ENCODE measurements at regions of chr2 and their contacts with region 1.

Region 1: GRCh38 chr2:151409601-151410484 is at the start of gene RIF1:
- DNase-seq: peak; percentile 68 to 77 (median 74)
- H3K4me3 ChIP-seq: peak within 1 kb of the TSS; percentile 69 to 95
- H3K4me3 Mint-ChIP-seq: peak within 1 kb of the TSS; percentile 91 to 99 (median 96)
- H3K27ac ChIP-seq: peak within 1 kb of the TSS; percentile 85
- H3K27ac Mint-ChIP-seq: peak within 1 kb of the TSS; percentile 86 to 97 (median 94)
- H3K4me1 ChIP-seq: peaks cover 22% of the 10 kb centered on the region
- H3K4me1 Mint-ChIP-seq: peaks cover 18 to 46% (median 31%) of the 10 kb centered on the region in 4 donors
- H3K27me3 ChIP-seq: no peaks in the 10 kb centered on the region
- H3K27me3 Mint-ChIP-seq: no peaks in the 10 kb centered on the region
- total RNA-seq, gene RIF1: 72.3 to 73.3 TPM

Region 2: GRCh38 chr2:149587220-149587949 is 1822.5 kb before region 1 on chr2 and contains the start of gene MMADHC:
- CTCF ChIA-PET with region 1: no interaction called
- POLR2A ChIA-PET with region 1: interaction called, 10 read pairs
- intact Hi-C with region 1: loop called (anchors 5 kb)
- DNase-seq: peak; percentile 90 to 93 (median 93)
- H3K4me3 ChIP-seq: peak within 1 kb of the TSS; percentile 90 to 91
- H3K4me3 Mint-ChIP-seq: peak within 1 kb of the TSS; percentile 93 to 100 (median 98)
- H3K27ac ChIP-seq: peak within 1 kb of the TSS; percentile 98
- H3K27ac Mint-ChIP-seq: peak within 1 kb of the TSS; percentile 96 to 100 (median 99)
- H3K4me1 ChIP-seq: peaks cover 40% of the 10 kb centered on the region
- H3K4me1 Mint-ChIP-seq: peaks cover 22 to 55% (median 42%) of the 10 kb centered on the region in 4 donors
- H3K27me3 ChIP-seq: no peaks in the 10 kb centered on the region
- H3K27me3 Mint-ChIP-seq: peaks cover 3 to 17% of the 10 kb centered on the region in 2 donors
- total RNA-seq, gene MMADHC: 66.4 to 69.4 TPM

Region 3: DNA sequence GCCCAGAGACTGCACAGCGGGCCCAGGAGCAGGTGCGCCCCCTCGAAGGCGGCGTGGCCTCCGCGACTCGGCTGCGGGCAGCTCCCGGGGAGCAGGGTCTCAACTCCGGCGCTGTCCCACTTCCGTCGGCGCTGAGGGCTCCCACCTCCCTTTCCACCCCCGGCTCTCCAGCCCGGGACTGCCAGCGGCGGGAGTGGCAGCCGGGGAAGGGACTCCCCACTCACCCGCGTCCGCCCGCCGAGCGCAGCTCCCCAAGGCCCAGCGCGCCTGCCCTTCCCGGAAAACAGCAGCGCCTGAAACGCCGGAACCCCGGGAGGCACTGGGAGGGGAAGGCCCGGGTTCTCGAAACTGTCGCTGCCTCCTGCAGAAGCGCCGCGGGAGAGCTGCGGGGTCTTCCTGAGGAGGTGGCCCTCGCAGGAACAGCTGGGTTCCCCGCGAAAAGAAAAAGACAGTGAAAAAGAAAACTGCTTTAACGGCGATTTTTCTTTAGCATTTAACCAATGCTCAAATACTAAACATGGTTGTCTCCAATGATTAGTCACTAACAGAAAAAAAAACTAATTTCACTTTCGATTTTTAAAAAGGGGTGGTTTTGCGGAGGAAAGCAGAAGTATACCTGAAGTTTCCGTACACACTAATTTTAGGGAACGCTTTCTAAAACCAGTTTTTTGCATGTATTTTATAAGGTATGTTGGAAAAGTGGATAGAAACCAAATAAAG is 120.3 kb before region 1 on chr2 and contains the start of gene NMI:
- CTCF ChIA-PET with region 1: interaction called, 6 read pairs
- POLR2A ChIA-PET with region 1: interaction called, 26 read pairs
- intact Hi-C with region 1: loop called (anchors 1 kb)
- DNase-seq: peak; percentile 75 to 84 (median 81)
- H3K4me3 ChIP-seq: peak within 1 kb of the TSS; percentile 70 to 82
- H3K4me3 Mint-ChIP-seq: peak within 1 kb of the TSS; percentile 90 to 98 (median 94)
- H3K27ac ChIP-seq: peak within 1 kb of the TSS; percentile 95
- H3K27ac Mint-ChIP-seq: peak within 1 kb of the TSS; percentile 96 to 99 (median 98)
- H3K4me1 ChIP-seq: peaks cover 45% of the 10 kb centered on the region
- H3K4me1 Mint-ChIP-seq: peaks cover 31 to 62% (median 49%) of the 10 kb centered on the region in 4 donors
- H3K27me3 ChIP-seq: no peaks in the 10 kb centered on the region
- H3K27me3 Mint-ChIP-seq: no peaks in the 10 kb centered on the region
- total RNA-seq, gene NMI: 38.6 to 40.0 TPM

Region 4: GRCh38 chr2:151374426-151374825 is 35.4 kb before region 1 on chr2:
- CTCF ChIA-PET with region 1: no interaction called
- POLR2A ChIA-PET with region 1: no interaction called
- intact Hi-C with region 1: no loop called
- DNase-seq: no peak
- H3K4me3 ChIP-seq: no peak overlapping the region
- H3K4me3 Mint-ChIP-seq: no peak overlapping the region
- H3K27ac ChIP-seq: no peak overlapping the region
- H3K27ac Mint-ChIP-seq: no peak overlapping the region
- H3K4me1 ChIP-seq: peaks cover 4% of the 10 kb centered on the region
- H3K4me1 Mint-ChIP-seq: peaks cover 0 to 3% (median 0%) of the 10 kb centered on the region in 4 donors
- H3K27me3 ChIP-seq: no peaks in the 10 kb centered on the region
- H3K27me3 Mint-ChIP-seq: peaks cover 2 to 3% of the 10 kb centered on the region in 2 donors

Region 5: GRCh38 chr2:151422917-151423439 is 13.1 kb after region 1 on chr2:
- CTCF ChIA-PET with region 1: interaction called, 4 read pairs
- POLR2A ChIA-PET with region 1: interaction called, 3 read pairs
- intact Hi-C with region 1: loop called (anchors 1 kb)
- DNase-seq: no peak
- H3K4me3 ChIP-seq: no peak overlapping the region
- H3K4me3 Mint-ChIP-seq: peak overlapping the region in 3 of 8 donors; percentile 1 to 18 (median 8)
- H3K27ac ChIP-seq: peak overlapping the region; percentile 33
- H3K27ac Mint-ChIP-seq: peak overlapping the region in 6 of 7 donors; percentile 11 to 95 (median 88)
- H3K4me1 ChIP-seq: peaks cover 29% of the 10 kb centered on the region
- H3K4me1 Mint-ChIP-seq: peaks cover 30 to 44% (median 36%) of the 10 kb centered on the region in 4 donors
- H3K27me3 ChIP-seq: no peaks in the 10 kb centered on the region
- H3K27me3 Mint-ChIP-seq: no peaks in the 10 kb centered on the region

Region 6: DNA sequence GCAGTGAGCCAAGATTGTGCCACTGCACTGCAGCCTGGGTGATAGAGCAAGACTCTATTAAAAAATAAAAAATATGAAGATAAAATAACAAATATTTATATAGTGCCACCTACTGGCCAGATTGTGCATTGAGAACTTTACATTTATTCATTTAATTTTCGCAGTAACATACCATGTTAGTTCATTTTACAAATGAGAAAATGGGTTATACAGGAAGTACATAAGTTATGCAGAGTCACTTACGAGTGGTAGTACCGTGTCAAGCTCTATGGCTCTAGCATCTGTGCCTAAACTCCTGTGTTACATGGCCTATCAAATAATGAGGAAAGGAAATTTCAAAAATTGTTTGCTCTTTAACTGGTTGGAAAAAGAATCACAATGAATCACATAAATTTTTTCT is 27.8 kb after region 1 on chr2:
- CTCF ChIA-PET with region 1: interaction called, 10 read pairs
- POLR2A ChIA-PET with region 1: no interaction called
- intact Hi-C with region 1: no loop called
- DNase-seq: peak in 4 of 5 donors; percentile 23 to 41 (median 32)
- H3K4me3 ChIP-seq: no peak overlapping the region
- H3K4me3 Mint-ChIP-seq: no peak overlapping the region
- H3K27ac ChIP-seq: no peak overlapping the region
- H3K27ac Mint-ChIP-seq: peak overlapping the region in 5 of 7 donors; percentile 36 to 81 (median 61)
- H3K4me1 ChIP-seq: no peaks in the 10 kb centered on the region
- H3K4me1 Mint-ChIP-seq: peaks cover 3 to 9% (median 6%) of the 10 kb centered on the region in 4 donors
- H3K27me3 ChIP-seq: no peaks in the 10 kb centered on the region
- H3K27me3 Mint-ChIP-seq: no peaks in the 10 kb centered on the region